ENCODE measurements at regions of chr11 and their contacts with region 1.

Region 1: GRCh38 chr11:125568970-125569914 is at the start of gene EI24:
- DNase-seq: peak; percentile 87 to 91
- H3K4me3 ChIP-seq: peak within 1 kb of the TSS; percentile 69 to 99 (median 96)
- H3K27ac ChIP-seq: peak within 1 kb of the TSS; percentile 48
- H3K4me1 ChIP-seq: peaks cover 2 to 10% (median 5%) of the 10 kb centered on the region in 4 experiments; a peak in 6 of 7 replicates
- H3K27me3 ChIP-seq: no peaks in the 10 kb centered on the region
- CTCF ChIP-seq: peak; percentile 54 to 75 (median 73)
- EP300 ChIP-seq: no peak
- POLR2A ChIP-seq: peak; percentile 48 to 78
- RAD21 ChIP-seq: peak; percentile 50 to 59
- total RNA-seq, gene EI24: 130 and 135 TPM in 2 replicates

Region 2: GRCh38 chr11:125592305-125593112 is 23.3 kb after region 1 on chr11 and contains the start of gene STT3A:
- CTCF ChIA-PET with region 1: interaction called, 3 read pairs
- POLR2A ChIA-PET with region 1: interaction called, 28 read pairs
- DNase-seq: peak; percentile 97 to 98
- H3K4me3 ChIP-seq: peak within 1 kb of the TSS; percentile 84 to 93 (median 88)
- H3K27ac ChIP-seq: peak within 1 kb of the TSS; percentile 70
- H3K4me1 ChIP-seq: peaks cover 0 to 2% (median 0%) of the 10 kb centered on the region in 4 experiments; a peak in 2 of 7 replicates
- H3K27me3 ChIP-seq: no peaks in the 10 kb centered on the region
- CTCF ChIP-seq: no peak
- EP300 ChIP-seq: no peak
- POLR2A ChIP-seq: peak in 1 of 2 experiments; percentile 77; a peak in 2 of 3 replicates
- RAD21 ChIP-seq: no peak
- total RNA-seq, gene STT3A: 173 and 175 TPM in 2 replicates

Region 3: DNA sequence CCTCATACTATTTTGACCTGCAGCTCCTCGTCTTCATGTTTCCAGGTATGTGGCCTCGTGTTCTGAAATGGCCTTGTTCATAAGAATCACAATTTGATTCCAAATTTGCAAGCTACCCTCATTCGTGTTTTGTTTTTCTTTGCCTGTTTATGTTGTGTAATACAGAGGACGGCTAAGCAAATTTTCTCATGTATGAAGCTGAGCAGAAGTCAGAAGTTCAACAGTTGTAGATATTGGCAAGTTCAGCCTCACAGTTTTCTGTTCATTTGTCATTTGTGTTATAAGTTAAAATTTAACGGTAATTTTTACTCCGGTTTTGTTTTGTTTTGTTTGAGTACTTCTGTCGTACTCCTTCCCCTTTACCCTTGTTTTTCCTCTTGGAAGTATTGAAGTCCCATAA is 40.3 kb after region 1 on chr11:
- CTCF ChIA-PET with region 1: no interaction called
- POLR2A ChIA-PET with region 1: no interaction called
- DNase-seq: no peak
- H3K4me3 ChIP-seq: no peak overlapping the region
- H3K27ac ChIP-seq: no peak overlapping the region
- H3K4me1 ChIP-seq: no peaks in the 10 kb centered on the region
- H3K27me3 ChIP-seq: no peaks in the 10 kb centered on the region
- CTCF ChIP-seq: no peak
- EP300 ChIP-seq: no peak
- POLR2A ChIP-seq: no peak
- RAD21 ChIP-seq: no peak

Region 4: GRCh38 chr11:125772834-125773505 is 203.7 kb after region 1 on chr11:
- CTCF ChIA-PET with region 1: no interaction called
- POLR2A ChIA-PET with region 1: no interaction called
- DNase-seq: no peak
- H3K4me3 ChIP-seq: no peak overlapping the region
- H3K27ac ChIP-seq: no peak overlapping the region
- H3K4me1 ChIP-seq: no peaks in the 10 kb centered on the region
- H3K27me3 ChIP-seq: no peaks in the 10 kb centered on the region
- CTCF ChIP-seq: no peak
- EP300 ChIP-seq: no peak
- POLR2A ChIP-seq: no peak
- RAD21 ChIP-seq: no peak

Region 5: GRCh38 chr11:125887373-125888324 is 318.4 kb after region 1 on chr11 and contains the start of gene HYLS1:
- CTCF ChIA-PET with region 1: no interaction called
- POLR2A ChIA-PET with region 1: no interaction called
- DNase-seq: peak; percentile 84 to 93
- H3K4me3 ChIP-seq: peak within 1 kb of the TSS; percentile 58 to 73 (median 62)
- H3K27ac ChIP-seq: peak within 1 kb of the TSS; percentile 77; the same call in 1 of the 2 replicates
- H3K4me1 ChIP-seq: no peaks in the 10 kb centered on the region
- H3K27me3 ChIP-seq: peaks cover 0 to 3% (median 2%) of the 10 kb centered on the region in 4 experiments; a peak in 4 of 7 replicates
- CTCF ChIP-seq: peak; percentile 3 to 14 (median 6); a peak in 3 of 4 replicates
- EP300 ChIP-seq: no peak
- POLR2A ChIP-seq: peak; percentile 71 to 82
- RAD21 ChIP-seq: peak in 1 of 2 experiments; percentile 7; a peak in 1 of 4 replicates
- total RNA-seq, gene HYLS1: 11.6 and 12.6 TPM in 2 replicates